AG04449 (cell line): ENCODE measurements at regions of chr17 and their contacts with region 1.

Region 1: DNA sequence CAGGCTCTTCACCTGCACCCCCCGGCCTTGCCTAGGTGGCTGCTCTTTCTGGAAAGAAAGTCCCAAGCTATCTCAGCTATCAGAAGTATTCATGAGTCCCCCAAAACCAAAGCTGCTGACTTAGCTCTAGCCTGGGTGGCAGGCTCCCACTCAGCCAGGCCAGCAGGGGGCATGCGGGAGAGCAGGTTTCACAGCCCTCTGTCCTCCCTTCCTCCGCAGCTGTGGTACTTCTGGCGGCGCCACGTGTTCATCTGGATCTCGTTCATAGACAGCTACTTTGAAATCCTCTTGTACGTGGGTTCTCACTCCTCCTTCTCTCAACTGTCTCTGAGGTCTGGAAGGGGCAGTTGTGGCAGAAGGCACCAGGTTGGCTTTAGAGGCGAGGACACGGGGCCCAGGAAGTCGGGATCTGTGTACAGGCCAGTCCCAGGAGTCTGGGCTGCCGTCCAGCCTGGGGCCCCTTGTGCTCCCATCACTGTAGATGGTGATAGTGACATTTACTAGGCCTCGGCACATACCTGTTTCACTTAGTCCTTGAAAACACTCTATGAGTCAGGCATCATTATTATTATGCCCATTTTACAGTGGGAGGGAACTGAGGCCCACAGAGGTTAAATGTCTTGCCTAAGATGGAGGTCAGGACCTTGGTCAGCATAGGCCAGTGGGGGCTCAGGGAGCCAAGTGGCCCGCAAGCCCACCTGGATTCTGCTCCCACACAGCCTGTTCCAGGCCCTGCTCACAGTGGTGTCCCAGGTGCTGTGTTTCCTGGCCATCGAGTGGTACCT is 12.9 kb downstream of the TRPV2 start:
- DNase-seq: no peak
- H3K4me3 ChIP-seq: no peak overlapping the region
- CTCF ChIP-seq: peak; percentile 87

Region 2: GRCh38 chr17:16415031-16415924 is 13.0 kb before region 1 on chr17 and contains the start of gene TRPV2:
- CTCF ChIA-PET with region 1: interaction called, 26 read pairs
- POLR2A ChIA-PET with region 1: no interaction called
- DNase-seq: no peak
- H3K4me3 ChIP-seq: peak within 1 kb of the TSS; percentile 64
- CTCF ChIP-seq: peak; percentile 22

Region 3: GRCh38 chr17:16438557-16439302 is 10.4 kb after region 1 on chr17:
- CTCF ChIA-PET with region 1: interaction called, 46 read pairs
- POLR2A ChIA-PET with region 1: interaction called, 17 read pairs
- DNase-seq: peak; percentile 99
- H3K4me3 ChIP-seq: peak overlapping the region; percentile 96
- CTCF ChIP-seq: no peak